SK-N-SH (cell line): ENCODE measurements at regions of chr19 and their contacts with region 1.

Region 1: DNA sequence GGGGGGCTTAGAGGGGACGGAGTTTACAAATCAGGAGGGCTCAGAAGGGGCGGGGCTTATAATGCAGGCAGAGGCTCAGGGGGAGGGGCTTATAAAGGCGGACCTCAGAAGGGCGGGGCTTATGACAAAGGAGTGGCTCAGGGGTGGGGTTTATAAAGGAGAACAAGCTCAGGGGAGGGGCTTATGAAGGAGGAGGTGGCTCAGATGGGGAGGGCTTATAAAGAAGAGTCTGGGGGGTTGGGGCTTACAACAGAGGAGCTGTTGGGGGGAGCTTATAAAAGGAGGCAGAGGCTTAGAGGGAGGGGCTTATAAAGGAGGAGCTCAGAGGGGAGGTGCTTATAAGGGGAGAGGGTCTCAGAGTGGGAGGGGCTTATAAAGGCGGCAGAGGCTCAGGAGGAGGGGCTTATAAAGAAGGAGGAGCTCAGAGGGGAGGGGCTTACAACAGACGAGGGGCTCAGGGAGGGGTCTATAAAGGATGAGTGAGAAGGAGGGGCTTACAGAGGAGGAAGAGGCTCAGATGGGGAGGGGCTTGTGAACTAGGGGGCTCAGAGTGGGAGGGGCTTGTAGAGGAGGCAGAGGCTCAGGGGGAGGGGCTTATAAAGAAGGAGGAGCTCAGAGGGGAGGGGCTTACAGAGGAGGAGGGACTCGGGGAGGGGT is 1.0 kb downstream of the SMIM24 start:
- DNase-seq: peak; percentile 78
- H3K4me3 ChIP-seq: no peak overlapping the region
- H3K27ac ChIP-seq: no peak overlapping the region
- H3K4me1 ChIP-seq: no peaks in the 10 kb centered on the region; a peak in 1 of 4 replicates
- H3K27me3 ChIP-seq: no peaks in the 10 kb centered on the region; the same call in none of the 2 replicates
- CTCF ChIP-seq: no peak
- EP300 ChIP-seq: no peak
- RAD21 ChIP-seq: no peak

Region 2: DNA sequence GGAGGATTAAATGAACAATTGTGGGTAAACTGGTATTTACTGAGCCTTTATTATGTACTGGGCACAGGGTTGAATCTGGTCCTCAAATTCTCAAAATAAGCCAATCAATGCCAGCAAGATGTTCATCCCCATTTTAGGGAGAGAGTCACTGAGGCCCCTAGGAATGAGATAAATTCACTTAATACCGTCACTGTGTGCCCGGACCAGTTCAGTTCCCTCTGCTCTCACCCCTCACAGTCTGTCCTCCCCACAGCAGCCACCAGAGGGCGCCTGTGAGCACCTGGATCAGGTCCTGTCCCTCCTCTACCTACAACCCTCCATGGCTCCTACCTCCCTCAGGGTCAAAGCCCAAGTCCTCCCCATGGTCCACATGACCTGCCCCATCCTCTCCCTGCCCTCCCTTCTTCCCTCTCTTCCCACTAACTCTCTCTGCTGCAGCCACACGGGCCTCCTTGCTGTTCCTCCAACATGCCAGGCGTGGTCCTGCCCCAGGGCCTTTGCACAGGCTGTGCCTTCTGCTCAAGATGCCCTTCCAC is 154.9 kb before region 1 on chr19:
- CTCF ChIA-PET with region 1: interaction called, 52 read pairs
- POLR2A ChIA-PET with region 1: no interaction called
- DNase-seq: peak; percentile 74
- H3K4me3 ChIP-seq: no peak overlapping the region
- H3K27ac ChIP-seq: no peak overlapping the region
- H3K4me1 ChIP-seq: no peaks in the 10 kb centered on the region
- H3K27me3 ChIP-seq: peaks cover 15% of the 10 kb centered on the region; the same call in 1 of the 2 replicates
- CTCF ChIP-seq: peak; percentile 80
- EP300 ChIP-seq: no peak
- RAD21 ChIP-seq: peak; percentile 33

Region 3: GRCh38 chr19:3500429-3501130 is 21.3 kb after region 1 on chr19 and contains the start of gene DOHH:
- CTCF ChIA-PET with region 1: interaction called, 22 read pairs
- POLR2A ChIA-PET with region 1: no interaction called
- DNase-seq: peak; percentile 96
- H3K4me3 ChIP-seq: peak within 1 kb of the TSS; percentile 78 to 96
- H3K27ac ChIP-seq: peak within 1 kb of the TSS; percentile 86 to 97
- H3K4me1 ChIP-seq: peaks cover 10 to 12% of the 10 kb centered on the region in 2 experiments; a peak in 2 of 4 replicates
- H3K27me3 ChIP-seq: no peaks in the 10 kb centered on the region
- CTCF ChIP-seq: no peak
- EP300 ChIP-seq: peak in 1 of 2 experiments; percentile 46; a peak in 1 of 4 replicates
- RAD21 ChIP-seq: no peak
- polyA plus RNA-seq, gene DOHH: 14.3 and 14.5 TPM in 2 replicates

Region 4: DNA sequence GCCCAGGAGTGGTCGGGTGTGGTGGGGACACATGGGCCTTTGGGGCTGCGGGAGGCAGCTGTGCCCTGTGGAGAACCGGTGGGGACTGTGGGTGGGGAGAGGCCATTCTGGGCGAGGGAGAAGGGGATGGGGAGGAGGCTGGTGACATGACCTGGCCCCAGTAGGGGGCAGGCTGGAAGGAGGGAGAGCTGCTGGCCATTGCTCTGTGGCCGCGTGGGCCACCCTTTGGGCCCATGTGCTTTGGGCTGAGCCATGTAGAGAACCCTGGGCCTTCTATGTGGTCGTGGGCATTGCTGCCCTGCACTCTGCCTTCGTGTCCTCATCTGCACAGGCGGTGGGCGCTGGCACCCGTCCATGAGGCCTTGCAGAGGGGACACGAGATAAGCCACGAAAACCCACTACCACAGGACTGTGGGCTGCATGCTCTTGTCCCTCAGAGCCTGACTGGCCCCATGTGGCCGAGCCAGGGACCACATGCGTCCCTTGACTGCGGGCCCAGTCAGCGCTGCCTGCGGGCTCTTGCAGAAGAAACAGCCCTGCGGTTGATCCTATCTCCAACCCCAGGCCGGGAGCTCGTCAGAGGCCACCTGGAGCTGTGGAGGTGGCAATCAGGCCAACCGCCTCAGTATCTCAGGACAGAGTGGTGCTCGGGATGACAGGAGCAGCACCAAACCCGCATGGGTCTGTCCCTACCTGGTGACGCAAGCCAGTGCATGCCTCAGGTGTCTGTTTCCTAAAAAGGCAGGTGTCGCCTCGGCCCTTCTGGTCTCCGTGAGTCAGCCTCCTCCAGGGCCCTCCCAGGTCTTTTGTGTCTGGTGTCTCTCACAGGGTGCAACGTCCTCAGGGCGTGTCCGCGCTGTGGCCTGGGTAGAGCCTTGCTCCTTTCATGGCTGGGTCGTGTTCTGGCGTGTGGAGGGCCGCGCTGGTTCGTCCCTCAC is 41.1 kb after region 1 on chr19:
- CTCF ChIA-PET with region 1: no interaction called
- POLR2A ChIA-PET with region 1: no interaction called
- DNase-seq: peak; percentile 66
- H3K4me3 ChIP-seq: no peak overlapping the region
- H3K27ac ChIP-seq: no peak overlapping the region; a peak in 1 of 4 replicates
- H3K4me1 ChIP-seq: peaks cover 0 to 20% of the 10 kb centered on the region in 2 experiments; a peak in 1 of 4 replicates
- H3K27me3 ChIP-seq: no peaks in the 10 kb centered on the region
- CTCF ChIP-seq: no peak
- EP300 ChIP-seq: no peak
- RAD21 ChIP-seq: no peak